ENCODE measurements at regions of chr6 and their contacts with region 1.

Region 1: GRCh38 chr6:144482142-144482541 is 197.0 kb downstream of the UTRN start:
- DNase-seq: peak; percentile 20
- ATAC-seq: peak; percentile 92
- H3K4me3 ChIP-seq: no peak overlapping the region
- H3K27ac ChIP-seq: no peak overlapping the region
- H3K4me1 ChIP-seq: no peaks in the 10 kb centered on the region
- H3K27me3 ChIP-seq: no peaks in the 10 kb centered on the region
- CTCF ChIP-seq: peak; percentile 63 to 79 (median 73); a peak in 5 of 6 replicates
- EP300 ChIP-seq: no peak
- POLR2A ChIP-seq: no peak
- RAD21 ChIP-seq: peak; percentile 73

Region 2: DNA sequence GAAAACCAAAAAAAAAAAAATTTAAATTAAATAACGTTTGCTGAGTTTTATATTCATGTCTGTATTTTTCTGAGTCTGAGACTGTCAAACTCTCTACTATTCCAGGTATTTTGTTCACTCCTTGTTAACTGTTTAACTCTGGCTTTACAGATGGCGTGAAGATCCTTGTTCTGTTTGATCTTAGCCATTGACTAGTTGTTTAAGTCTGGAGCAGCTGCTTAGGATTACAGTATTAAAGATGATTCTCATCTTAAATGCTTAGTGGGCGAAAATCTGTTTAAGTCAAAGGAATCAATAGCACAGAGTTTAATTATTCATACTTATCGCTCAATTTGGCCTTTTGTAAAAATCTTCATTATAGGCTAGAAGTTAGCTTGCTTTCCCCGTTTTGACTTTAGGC is 802.0 kb before region 1 on chr6:
- CTCF ChIA-PET with region 1: no interaction called
- POLR2A ChIA-PET with region 1: no interaction called
- RAD21 ChIA-PET with region 1: no interaction called
- SMC1A ChIA-PET with region 1: no interaction called
- in situ Hi-C with region 1: no loop called
- intact Hi-C with region 1: no loop called
- DNase-seq: no peak
- ATAC-seq: no peak
- H3K4me3 ChIP-seq: no peak overlapping the region
- H3K27ac ChIP-seq: no peak overlapping the region
- H3K4me1 ChIP-seq: no peaks in the 10 kb centered on the region
- H3K27me3 ChIP-seq: peaks cover 3 to 14% of the 10 kb centered on the region in 2 experiments; a peak in 2 of 4 replicates
- CTCF ChIP-seq: no peak
- EP300 ChIP-seq: no peak
- POLR2A ChIP-seq: no peak
- RAD21 ChIP-seq: no peak

Region 3: DNA sequence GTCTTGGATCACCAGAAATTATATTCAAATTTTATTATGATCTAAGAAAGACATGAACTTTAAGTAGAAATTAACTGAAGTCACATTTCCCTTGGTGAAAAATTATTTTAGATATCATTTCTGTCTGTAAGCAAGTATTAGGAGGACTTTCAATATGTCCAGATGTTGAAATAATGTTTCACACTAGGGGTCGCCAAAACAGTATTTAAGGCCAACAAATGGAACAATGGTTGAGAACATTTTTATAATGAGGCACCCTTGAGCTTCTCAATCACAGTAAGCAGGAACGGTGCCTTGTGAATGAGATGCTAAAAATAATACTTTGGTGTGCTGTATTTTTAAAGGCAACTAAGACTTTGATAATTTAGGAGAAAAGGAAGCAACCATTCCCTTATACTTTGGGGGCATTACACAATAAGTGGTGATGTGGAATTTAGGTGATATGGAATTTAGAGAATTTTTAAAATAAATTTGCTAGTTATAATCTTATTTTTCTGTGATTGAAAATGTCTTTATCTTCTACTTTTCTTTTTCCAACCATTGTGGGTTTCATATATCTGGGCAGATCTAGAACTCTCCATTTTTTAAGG is 377.1 kb before region 1 on chr6:
- CTCF ChIA-PET with region 1: interaction called, 38 read pairs
- POLR2A ChIA-PET with region 1: no interaction called
- RAD21 ChIA-PET with region 1: interaction called, 35 read pairs
- SMC1A ChIA-PET with region 1: interaction called, 14 read pairs
- in situ Hi-C with region 1: no loop called
- intact Hi-C with region 1: loop called (anchors 1 kb)
- DNase-seq: peak; percentile 53
- ATAC-seq: peak; percentile 97
- H3K4me3 ChIP-seq: no peak overlapping the region
- H3K27ac ChIP-seq: no peak overlapping the region
- H3K4me1 ChIP-seq: no peaks in the 10 kb centered on the region
- H3K27me3 ChIP-seq: no peaks in the 10 kb centered on the region
- CTCF ChIP-seq: peak; percentile 59 to 89 (median 72)
- EP300 ChIP-seq: no peak
- POLR2A ChIP-seq: no peak
- RAD21 ChIP-seq: peak; percentile 99

Region 4: DNA sequence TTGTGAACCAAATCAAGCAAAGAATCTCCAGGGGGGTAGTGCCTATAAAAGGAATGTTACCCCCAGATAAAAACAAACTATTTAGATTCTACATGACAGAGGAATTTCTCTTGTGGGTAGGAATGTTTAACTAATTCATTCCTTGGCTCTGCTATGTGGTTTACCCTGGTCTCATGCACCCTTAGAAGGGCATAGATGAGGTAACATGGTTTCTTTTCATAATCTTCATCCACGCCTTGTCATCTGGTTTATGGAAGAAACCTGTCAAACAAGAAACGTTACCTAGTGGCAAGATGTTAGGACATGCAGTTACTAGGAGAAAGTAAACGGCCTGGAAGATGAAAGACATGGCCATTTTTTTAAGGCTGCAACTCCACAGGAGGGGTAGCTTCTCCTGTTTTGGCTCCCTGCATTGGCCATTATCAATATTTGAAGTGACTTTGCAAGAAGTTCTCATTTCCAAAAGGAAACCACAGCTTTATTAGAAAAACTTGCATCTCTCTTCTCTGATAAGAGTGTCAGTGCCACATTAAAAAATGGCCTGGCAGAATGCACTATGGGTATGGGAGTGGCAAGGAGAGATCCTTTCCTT is 286.4 kb before region 1 on chr6:
- CTCF ChIA-PET with region 1: no interaction called
- POLR2A ChIA-PET with region 1: no interaction called
- RAD21 ChIA-PET with region 1: no interaction called
- SMC1A ChIA-PET with region 1: no interaction called
- in situ Hi-C with region 1: no loop called
- intact Hi-C with region 1: no loop called
- DNase-seq: no peak
- ATAC-seq: no peak
- H3K4me3 ChIP-seq: no peak overlapping the region
- H3K27ac ChIP-seq: no peak overlapping the region
- H3K4me1 ChIP-seq: no peaks in the 10 kb centered on the region
- H3K27me3 ChIP-seq: no peaks in the 10 kb centered on the region
- CTCF ChIP-seq: no peak
- EP300 ChIP-seq: no peak
- POLR2A ChIP-seq: no peak
- RAD21 ChIP-seq: no peak

Region 5: DNA sequence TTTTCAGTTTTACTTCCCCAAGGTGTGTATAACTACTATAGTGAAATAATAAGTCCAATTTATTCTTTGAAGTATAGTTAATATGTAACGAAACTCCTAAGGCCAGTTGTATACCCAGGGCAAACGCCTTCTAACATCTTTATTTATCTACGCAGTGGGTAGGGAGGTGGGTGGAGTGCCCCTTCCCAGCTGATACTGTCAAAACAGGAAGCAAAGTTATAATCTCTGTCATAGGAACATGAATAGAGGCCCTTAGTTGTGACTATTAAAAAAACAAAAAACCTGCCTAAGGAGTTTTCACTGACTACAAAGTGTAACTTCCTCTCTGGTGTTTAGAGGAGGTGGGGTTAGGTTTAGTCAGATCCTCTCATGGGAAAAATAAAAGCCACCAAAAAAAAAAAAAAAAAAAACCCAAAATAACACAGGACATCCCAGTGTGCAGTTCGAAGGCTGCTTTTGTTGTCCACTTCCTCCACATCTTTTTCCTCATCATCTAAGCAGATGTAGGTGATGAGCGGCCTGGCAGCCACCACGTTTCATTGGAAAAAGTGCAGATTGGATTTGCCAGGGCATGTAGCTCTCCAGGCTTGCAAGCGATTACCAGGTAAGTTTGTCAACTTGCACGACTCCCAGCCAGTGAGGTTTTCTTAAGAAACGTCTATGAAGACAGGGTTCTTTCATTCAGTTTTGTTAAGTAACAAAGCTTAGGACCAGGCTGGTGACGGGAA is 138.3 kb before region 1 on chr6:
- CTCF ChIA-PET with region 1: interaction called, 10 read pairs
- POLR2A ChIA-PET with region 1: interaction called, 3 read pairs
- RAD21 ChIA-PET with region 1: interaction called, 4 read pairs
- SMC1A ChIA-PET with region 1: interaction called, 4 read pairs
- in situ Hi-C with region 1: no loop called
- intact Hi-C with region 1: loop called (anchors 5 kb)
- DNase-seq: peak; percentile 69
- ATAC-seq: peak; percentile 51
- H3K4me3 ChIP-seq: peak overlapping the region; percentile 82
- H3K27ac ChIP-seq: peak overlapping the region; percentile 97
- H3K4me1 ChIP-seq: peaks cover 41% of the 10 kb centered on the region
- H3K27me3 ChIP-seq: no peaks in the 10 kb centered on the region
- CTCF ChIP-seq: no peak
- EP300 ChIP-seq: peak in 1 of 2 experiments; percentile 74; a peak in 3 of 4 replicates
- POLR2A ChIP-seq: peak; percentile 35; the same call in 1 of the 2 replicates
- RAD21 ChIP-seq: no peak

Region 6: GRCh38 chr6:144460327-144461095 is 21.6 kb before region 1 on chr6:
- CTCF ChIA-PET with region 1: interaction called, 44 read pairs
- POLR2A ChIA-PET with region 1: no interaction called
- RAD21 ChIA-PET with region 1: interaction called, 29 read pairs
- SMC1A ChIA-PET with region 1: interaction called, 24 read pairs
- in situ Hi-C with region 1: no loop called
- intact Hi-C with region 1: no loop called
- DNase-seq: peak; percentile 64
- ATAC-seq: peak; percentile 91
- H3K4me3 ChIP-seq: no peak overlapping the region
- H3K27ac ChIP-seq: peak overlapping the region; percentile 40
- H3K4me1 ChIP-seq: peaks cover 13% of the 10 kb centered on the region
- H3K27me3 ChIP-seq: no peaks in the 10 kb centered on the region
- CTCF ChIP-seq: 0 out of 6 replicates have a peak, but pooled peaks of 2 of the 3 experiments have one; percentile 3 to 5
- EP300 ChIP-seq: no peak
- POLR2A ChIP-seq: no peak
- RAD21 ChIP-seq: no peak